H1 (cell line): ENCODE measurements at regions of chr10 and their contacts with region 1.

Region 1: GRCh38 chr10:17673456-17674061 is 29.6 kb downstream of the STAM start:
- DNase-seq: no peak
- H3K4me3 ChIP-seq: no peak overlapping the region
- H3K27ac ChIP-seq: no peak overlapping the region
- H3K4me1 ChIP-seq: peaks cover 0 to 32% (median 15%) of the 10 kb centered on the region in 4 experiments; a peak in 6 of 7 replicates
- H3K27me3 ChIP-seq: no peaks in the 10 kb centered on the region
- CTCF ChIP-seq: no peak
- EP300 ChIP-seq: no peak
- POLR2A ChIP-seq: no peak
- RAD21 ChIP-seq: no peak

Region 2: GRCh38 chr10:17460756-17461155 is 212.8 kb before region 1 on chr10:
- CTCF ChIA-PET with region 1: no interaction called
- POLR2A ChIA-PET with region 1: no interaction called
- DNase-seq: no peak
- H3K4me3 ChIP-seq: no peak overlapping the region
- H3K27ac ChIP-seq: no peak overlapping the region
- H3K4me1 ChIP-seq: peaks cover 0 to 2% (median 0%) of the 10 kb centered on the region in 4 experiments; a peak in 1 of 7 replicates
- H3K27me3 ChIP-seq: peaks cover 0 to 2% (median under 1%) of the 10 kb centered on the region in 4 experiments; a peak in 4 of 7 replicates
- CTCF ChIP-seq: no peak
- EP300 ChIP-seq: no peak
- POLR2A ChIP-seq: no peak
- RAD21 ChIP-seq: no peak

Region 3: DNA sequence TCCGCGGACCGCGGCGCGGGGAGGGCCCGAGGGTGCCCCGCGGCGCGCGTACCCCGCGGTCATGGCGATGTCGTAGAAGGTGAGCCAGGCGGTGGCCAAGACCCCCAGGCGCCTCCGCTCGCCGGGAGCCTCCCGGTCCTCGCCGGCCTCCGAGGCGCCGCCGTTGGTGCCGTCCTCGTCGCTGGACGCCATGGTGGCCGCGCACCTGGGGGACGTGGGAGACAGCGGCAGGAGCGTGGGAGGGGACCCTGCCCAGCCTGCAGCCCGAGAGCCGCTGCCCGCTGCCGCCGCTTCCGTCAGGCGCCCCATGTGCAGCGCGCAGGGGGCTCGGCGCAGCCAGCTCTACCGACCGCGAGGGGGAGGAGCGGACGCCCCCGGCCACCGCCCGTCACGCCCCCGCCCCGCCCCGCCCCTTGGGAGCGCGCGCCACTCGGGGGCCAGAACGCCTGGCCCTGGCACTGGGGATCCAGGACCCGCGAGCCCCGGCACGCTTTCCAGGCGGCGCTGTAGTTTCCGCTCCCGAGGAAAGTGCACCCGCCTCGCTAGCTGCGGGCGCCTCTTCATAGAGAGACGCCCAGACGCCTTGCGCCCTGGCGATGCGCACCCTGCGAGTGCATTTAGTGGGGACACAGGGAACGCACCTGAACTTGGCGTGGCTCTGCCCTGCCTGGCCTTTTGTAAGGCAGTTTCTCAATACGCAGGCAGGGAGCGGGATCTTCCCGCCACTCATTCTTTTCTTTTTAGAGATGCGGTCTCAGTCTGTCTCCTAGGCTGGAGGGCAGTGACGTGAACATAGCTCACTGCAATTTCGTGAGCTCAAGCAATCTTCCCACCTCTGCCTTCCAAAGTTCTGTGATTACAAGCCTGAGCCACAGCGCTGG is 56.3 kb before region 1 on chr10 and contains the start of gene HACD1:
- CTCF ChIA-PET with region 1: interaction called, 3 read pairs
- POLR2A ChIA-PET with region 1: interaction called, 19 read pairs
- DNase-seq: peak; percentile 50 to 84
- H3K4me3 ChIP-seq: peak within 1 kb of the TSS; percentile 63 to 89 (median 76)
- H3K27ac ChIP-seq: peak within 1 kb of the TSS; percentile 70; the same call in 1 of the 2 replicates
- H3K4me1 ChIP-seq: no peaks in the 10 kb centered on the region
- H3K27me3 ChIP-seq: no peaks in the 10 kb centered on the region
- CTCF ChIP-seq: peak in 1 of 3 experiments; percentile 1; a peak in 1 of 4 replicates
- EP300 ChIP-seq: no peak
- POLR2A ChIP-seq: peak in 1 of 2 experiments; percentile 67; a peak in 2 of 3 replicates
- RAD21 ChIP-seq: peak in 1 of 2 experiments; percentile 17; a peak in 1 of 4 replicates
- total RNA-seq, gene HACD1: 30.8 and 32.6 TPM in 2 replicates